ENCODE measurements at regions of chr6 and their contacts with region 1.

Region 1: GRCh38 chr6:53794720-53795253 is at the start of gene LRRC1:
- DNase-seq: peak; percentile 88
- ATAC-seq: peak; percentile 72
- H3K4me3 ChIP-seq: peak within 1 kb of the TSS; percentile 92 to 98 (median 96)
- H3K27ac ChIP-seq: peak within 1 kb of the TSS; percentile 81
- H3K4me1 ChIP-seq: peaks cover 59% of the 10 kb centered on the region
- H3K27me3 ChIP-seq: no peaks in the 10 kb centered on the region; a peak in 1 of 5 replicates
- CTCF ChIP-seq: no peak
- EP300 ChIP-seq: 0 out of 4 replicates have a peak, but pooled peaks of 1 of the 2 experiments have one; percentile 24
- POLR2A ChIP-seq: peak; percentile 83 to 89
- RAD21 ChIP-seq: 0 out of 2 replicates have a peak, but pooled peaks have one; percentile 12
- total RNA-seq, gene LRRC1: 27.7 and 31.6 TPM in 2 replicates

Region 2: GRCh38 chr6:53544470-53545308 is 250.1 kb before region 1 on chr6 and contains the start of gene GCLC:
- CTCF ChIA-PET with region 1: no interaction called
- POLR2A ChIA-PET with region 1: interaction called, 17 read pairs
- in situ Hi-C with region 1: loop called (anchors 5 kb)
- intact Hi-C with region 1: loop called (anchors 2 kb)
- DNase-seq: peak; percentile 92
- ATAC-seq: peak; percentile 76
- H3K4me3 ChIP-seq: peak within 1 kb of the TSS; percentile 91 to 99 (median 97)
- H3K27ac ChIP-seq: peak within 1 kb of the TSS; percentile 97
- H3K4me1 ChIP-seq: peaks cover 68% of the 10 kb centered on the region
- H3K27me3 ChIP-seq: no peaks in the 10 kb centered on the region; a peak in 1 of 5 replicates
- CTCF ChIP-seq: peak; percentile 76
- EP300 ChIP-seq: peak in 1 of 2 experiments; percentile 47; a peak in 2 of 4 replicates
- POLR2A ChIP-seq: peak; percentile 92 to 93
- RAD21 ChIP-seq: peak; percentile 99
- total RNA-seq, gene GCLC: 84.6 and 96.9 TPM in 2 replicates

Region 3: DNA sequence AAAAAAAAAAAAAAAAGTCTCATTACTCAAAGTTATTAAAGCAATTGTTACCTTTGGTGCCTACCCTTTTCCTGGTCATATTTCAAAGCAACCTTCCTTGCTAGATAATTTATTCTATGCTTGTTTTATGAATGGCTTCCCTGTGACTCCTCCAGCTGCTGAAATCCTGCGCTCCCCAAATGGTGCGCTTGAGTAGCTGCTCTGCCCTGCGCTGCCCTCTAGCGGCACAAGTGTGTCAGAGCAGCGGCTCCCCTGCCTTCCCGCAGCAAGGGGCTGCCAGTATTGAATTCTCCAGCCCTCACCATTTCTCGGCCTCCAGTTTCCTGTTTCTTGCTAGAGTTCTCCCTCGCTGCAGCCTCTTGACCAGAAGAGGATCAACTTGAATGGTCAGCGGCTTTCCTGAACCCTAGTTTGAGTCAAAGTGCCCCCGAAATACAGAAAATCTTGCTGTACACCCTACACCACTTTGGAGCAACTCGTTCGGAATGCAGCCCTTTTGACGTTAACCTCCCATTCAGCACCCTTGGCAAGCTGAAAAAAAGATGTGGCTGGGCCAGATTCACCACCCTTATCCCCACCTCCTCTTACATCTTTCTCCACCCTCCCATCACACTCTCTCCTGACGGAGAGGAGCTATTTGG is 68.9 kb before region 1 on chr6:
- CTCF ChIA-PET with region 1: interaction called, 3 read pairs
- POLR2A ChIA-PET with region 1: interaction called, 5 read pairs
- in situ Hi-C with region 1: no loop called
- intact Hi-C with region 1: loop called (anchors 1 kb)
- DNase-seq: peak; percentile 72
- ATAC-seq: peak; percentile 94
- H3K4me3 ChIP-seq: no peak overlapping the region
- H3K27ac ChIP-seq: no peak overlapping the region
- H3K4me1 ChIP-seq: peaks cover 17% of the 10 kb centered on the region; the same call in 1 of the 2 replicates
- H3K27me3 ChIP-seq: no peaks in the 10 kb centered on the region
- CTCF ChIP-seq: peak; percentile 95
- EP300 ChIP-seq: no peak
- POLR2A ChIP-seq: no peak
- RAD21 ChIP-seq: peak; percentile 82

Region 4: GRCh38 chr6:53811082-53811481 is 16.3 kb after region 1 on chr6:
- CTCF ChIA-PET with region 1: no interaction called
- POLR2A ChIA-PET with region 1: interaction called, 44 read pairs
- in situ Hi-C with region 1: no loop called
- intact Hi-C with region 1: loop called (anchors 2 kb)
- DNase-seq: peak; percentile 51
- ATAC-seq: peak; percentile 34; the same call in 2 of the 3 replicates
- H3K4me3 ChIP-seq: no peak overlapping the region
- H3K27ac ChIP-seq: no peak overlapping the region
- H3K4me1 ChIP-seq: peaks cover 61% of the 10 kb centered on the region
- H3K27me3 ChIP-seq: no peaks in the 10 kb centered on the region
- CTCF ChIP-seq: no peak
- EP300 ChIP-seq: no peak
- POLR2A ChIP-seq: no peak
- RAD21 ChIP-seq: no peak

Region 5: GRCh38 chr6:53854843-53855567 is 60.2 kb after region 1 on chr6:
- CTCF ChIA-PET with region 1: no interaction called
- POLR2A ChIA-PET with region 1: interaction called, 12 read pairs
- in situ Hi-C with region 1: no loop called
- intact Hi-C with region 1: loop called (anchors 1 kb)
- DNase-seq: peak; percentile 91
- ATAC-seq: peak; percentile 96
- H3K4me3 ChIP-seq: no peak overlapping the region
- H3K27ac ChIP-seq: peak overlapping the region; percentile 48
- H3K4me1 ChIP-seq: peaks cover 46% of the 10 kb centered on the region
- H3K27me3 ChIP-seq: no peaks in the 10 kb centered on the region
- CTCF ChIP-seq: no peak
- EP300 ChIP-seq: peak in 1 of 2 experiments; percentile 82; a peak in 2 of 4 replicates
- POLR2A ChIP-seq: no peak
- RAD21 ChIP-seq: no peak

Region 6: GRCh38 chr6:53943395-53943794 is 148.6 kb after region 1 on chr6:
- CTCF ChIA-PET with region 1: no interaction called
- POLR2A ChIA-PET with region 1: no interaction called
- in situ Hi-C with region 1: no loop called
- intact Hi-C with region 1: loop called (anchors 5 kb)
- DNase-seq: no peak
- ATAC-seq: peak; percentile 25
- H3K4me3 ChIP-seq: no peak overlapping the region
- H3K27ac ChIP-seq: no peak overlapping the region
- H3K4me1 ChIP-seq: no peaks in the 10 kb centered on the region
- H3K27me3 ChIP-seq: no peaks in the 10 kb centered on the region; a peak in 1 of 5 replicates
- CTCF ChIP-seq: no peak
- EP300 ChIP-seq: no peak
- POLR2A ChIP-seq: no peak
- RAD21 ChIP-seq: no peak

Measured in HepG2 (cell line).